ENCODE measurements at regions of chr7 and their contacts with region 1.

Region 1: GRCh38 chr7:87767797-87768196 is 108.4 kb downstream of the SLC25A40 start:
- DNase-seq: no peak
- H3K4me3 ChIP-seq: no peak overlapping the region
- H3K27ac ChIP-seq: no peak overlapping the region
- H3K4me1 ChIP-seq: no peaks in the 10 kb centered on the region
- H3K27me3 ChIP-seq: no peaks in the 10 kb centered on the region
- CTCF ChIP-seq: no peak

Region 2: GRCh38 chr7:88071994-88072714 is 304.4 kb after region 1 on chr7:
- CTCF ChIA-PET with region 1: no interaction called
- POLR2A ChIA-PET with region 1: interaction called, 10 read pairs
- intact Hi-C with region 1: no loop called
- DNase-seq: no peak
- H3K4me3 ChIP-seq: no peak overlapping the region
- H3K27ac ChIP-seq: no peak overlapping the region
- H3K4me1 ChIP-seq: no peaks in the 10 kb centered on the region
- H3K27me3 ChIP-seq: no peaks in the 10 kb centered on the region
- CTCF ChIP-seq: no peak

Region 3: GRCh38 chr7:88243345-88243909 is 475.6 kb after region 1 on chr7:
- CTCF ChIA-PET with region 1: no interaction called
- POLR2A ChIA-PET with region 1: no interaction called
- intact Hi-C with region 1: no loop called
- DNase-seq: peak; percentile 52
- H3K4me3 ChIP-seq: no peak overlapping the region
- H3K27ac ChIP-seq: no peak overlapping the region
- H3K4me1 ChIP-seq: no peaks in the 10 kb centered on the region
- H3K27me3 ChIP-seq: peaks cover 11% of the 10 kb centered on the region
- CTCF ChIP-seq: peak; percentile 70